ENCODE measurements at regions of chr17 and their contacts with region 1.

Region 1: DNA sequence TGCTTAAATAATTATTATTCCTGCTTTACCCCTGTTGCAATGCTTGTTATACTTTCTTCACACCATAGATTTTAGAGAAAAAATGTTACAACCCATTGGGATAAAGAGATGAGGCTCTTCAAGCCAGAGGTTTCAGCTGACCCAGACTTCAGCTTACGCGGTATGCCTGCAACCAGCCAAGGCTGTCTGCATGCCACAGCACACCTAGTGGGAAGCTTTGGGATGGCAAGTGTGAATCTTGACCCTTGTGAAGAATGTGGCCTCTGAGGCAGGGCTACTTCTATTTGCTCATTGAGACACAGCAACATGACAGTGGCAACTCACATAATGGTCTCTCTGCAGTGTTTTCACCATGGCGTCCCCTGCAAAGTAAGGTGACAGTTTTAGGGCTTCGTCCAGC is 193.9 kb upstream of the PIRT start:
- DNase-seq: no peak
- ATAC-seq: no peak
- H3K4me3 ChIP-seq: no peak overlapping the region
- H3K27ac ChIP-seq: no peak overlapping the region
- H3K4me1 ChIP-seq: no peaks in the 10 kb centered on the region
- H3K27me3 ChIP-seq: no peaks in the 10 kb centered on the region

Region 2: DNA sequence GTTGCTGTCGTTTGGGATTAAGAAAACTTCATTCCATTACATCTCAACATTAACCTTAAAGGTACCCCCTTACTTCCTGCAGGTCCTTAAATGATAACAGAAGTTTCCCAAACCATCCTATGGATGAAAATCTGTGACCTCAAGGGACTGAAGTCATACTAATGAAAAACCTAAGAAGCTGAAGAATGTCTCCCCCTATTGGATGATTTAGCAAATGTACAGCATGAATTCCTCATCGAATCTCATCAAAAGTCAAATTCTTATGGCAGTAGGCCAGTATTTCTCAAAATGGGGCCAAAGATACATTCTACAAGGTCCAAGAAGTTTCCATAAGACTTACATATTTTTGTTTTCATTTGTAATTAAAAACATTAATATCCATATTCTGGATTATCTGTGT is 347.9 kb before region 1 on chr17:
- intact Hi-C with region 1: no loop called
- DNase-seq: no peak
- ATAC-seq: no peak
- H3K4me3 ChIP-seq: no peak overlapping the region
- H3K27ac ChIP-seq: no peak overlapping the region
- H3K4me1 ChIP-seq: no peaks in the 10 kb centered on the region
- H3K27me3 ChIP-seq: no peaks in the 10 kb centered on the region

Region 3: DNA sequence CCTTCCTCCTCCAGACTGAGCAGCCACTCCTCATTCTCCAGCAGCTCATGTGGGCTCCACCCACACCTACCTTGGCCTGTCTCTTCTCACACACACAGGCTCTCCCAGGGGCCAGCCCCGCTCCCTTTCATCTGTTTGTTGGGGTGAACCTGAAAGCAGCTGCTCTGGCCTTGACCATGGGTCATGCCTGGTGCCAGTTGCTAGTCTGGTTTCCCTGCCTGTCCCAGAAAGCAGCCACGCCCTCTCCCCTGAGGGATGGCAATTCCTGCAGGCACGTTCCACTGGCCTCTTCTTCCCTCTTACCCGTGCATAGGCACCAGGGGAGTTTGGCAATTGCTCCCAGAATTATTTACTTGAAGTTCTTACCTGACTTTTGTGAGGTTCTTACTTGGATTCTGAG is 216.4 kb before region 1 on chr17:
- intact Hi-C with region 1: no loop called
- DNase-seq: no peak
- ATAC-seq: peak in 1 of 2 donors; percentile 22
- H3K4me3 ChIP-seq: no peak overlapping the region
- H3K27ac ChIP-seq: no peak overlapping the region
- H3K4me1 ChIP-seq: no peaks in the 10 kb centered on the region
- H3K27me3 ChIP-seq: no peaks in the 10 kb centered on the region

Region 4: GRCh38 chr17:10956821-10957220 is 75.0 kb before region 1 on chr17:
- intact Hi-C with region 1: no loop called
- DNase-seq: no peak
- ATAC-seq: no peak
- H3K4me3 ChIP-seq: no peak overlapping the region
- H3K27ac ChIP-seq: no peak overlapping the region
- H3K4me1 ChIP-seq: no peaks in the 10 kb centered on the region
- H3K27me3 ChIP-seq: no peaks in the 10 kb centered on the region

Region 5: DNA sequence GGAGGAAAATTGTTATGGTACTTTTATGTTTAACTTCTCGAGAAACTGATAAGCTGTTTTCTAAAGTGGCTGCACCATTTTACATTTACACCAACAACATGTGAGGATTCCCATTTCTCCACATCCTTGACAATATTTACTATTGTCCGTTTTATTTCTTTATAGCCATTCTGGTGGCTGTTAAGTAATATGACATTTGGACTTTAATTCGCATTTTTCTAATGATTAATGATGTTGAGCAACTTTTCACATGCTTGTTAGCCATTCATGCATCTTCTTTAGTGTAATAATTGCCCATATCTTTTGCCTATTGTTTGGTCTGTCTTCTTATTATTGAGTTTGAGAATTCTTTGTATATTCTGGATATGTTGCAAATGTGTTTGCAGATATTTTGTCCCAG is 680.7 kb after region 1 on chr17:
- intact Hi-C with region 1: no loop called
- DNase-seq: no peak
- ATAC-seq: no peak
- H3K4me3 ChIP-seq: no peak overlapping the region
- H3K27ac ChIP-seq: no peak overlapping the region
- H3K4me1 ChIP-seq: no peaks in the 10 kb centered on the region
- H3K27me3 ChIP-seq: no peaks in the 10 kb centered on the region

Region 6: DNA sequence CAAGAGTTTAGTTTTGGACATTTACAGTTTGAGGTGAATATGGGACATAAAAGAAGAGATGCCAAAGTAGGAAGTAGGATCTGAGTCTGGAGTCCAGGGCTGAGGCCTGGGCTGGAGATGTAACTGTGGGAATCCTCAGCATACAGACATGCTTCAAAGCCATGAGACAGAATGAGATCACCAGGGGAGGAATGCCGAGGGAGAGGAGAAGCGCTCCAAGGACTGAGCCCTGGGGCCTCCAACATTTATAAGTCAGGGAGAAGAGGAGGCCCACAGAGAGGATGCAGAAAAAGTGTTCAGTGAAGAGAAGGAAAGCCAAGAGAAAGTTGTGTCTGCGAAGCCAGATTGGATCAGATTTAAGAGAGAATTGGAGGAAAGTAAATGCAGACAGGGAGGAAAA is 1356.4 kb after region 1 on chr17:
- intact Hi-C with region 1: loop called in 1 of 4 experiments (anchors 10 kb)
- DNase-seq: no peak
- ATAC-seq: no peak
- H3K4me3 ChIP-seq: no peak overlapping the region
- H3K27ac ChIP-seq: no peak overlapping the region
- H3K4me1 ChIP-seq: no peaks in the 10 kb centered on the region
- H3K27me3 ChIP-seq: no peaks in the 10 kb centered on the region